ENCODE measurements at regions of chr5 and their contacts with region 1.

Region 1: GRCh38 chr5:60960591-60960990 is 15.6 kb downstream of the NDUFAF2 start:
- DNase-seq: peak; percentile 40
- H3K4me3 ChIP-seq: no peak overlapping the region
- H3K27ac ChIP-seq: no peak overlapping the region
- H3K4me1 ChIP-seq: no peaks in the 10 kb centered on the region
- H3K27me3 ChIP-seq: no peaks in the 10 kb centered on the region
- CTCF ChIP-seq: peak; percentile 23 to 45
- POLR2A ChIP-seq: no peak

Region 2: GRCh38 chr5:60872892-60873291 is 87.7 kb before region 1 on chr5:
- CTCF ChIA-PET with region 1: no interaction called
- POLR2A ChIA-PET with region 1: no interaction called
- dilution Hi-C with region 1: no loop called
- intact Hi-C with region 1: no loop called
- DNase-seq: no peak
- H3K4me3 ChIP-seq: no peak overlapping the region
- H3K27ac ChIP-seq: no peak overlapping the region
- H3K4me1 ChIP-seq: no peaks in the 10 kb centered on the region
- H3K27me3 ChIP-seq: no peaks in the 10 kb centered on the region
- CTCF ChIP-seq: no peak
- POLR2A ChIP-seq: no peak

Region 3: GRCh38 chr5:60972231-60972630 is 11.6 kb after region 1 on chr5:
- CTCF ChIA-PET with region 1: interaction called, 13 read pairs
- POLR2A ChIA-PET with region 1: no interaction called
- dilution Hi-C with region 1: no loop called
- intact Hi-C with region 1: no loop called
- DNase-seq: no peak
- H3K4me3 ChIP-seq: no peak overlapping the region
- H3K27ac ChIP-seq: no peak overlapping the region
- H3K4me1 ChIP-seq: no peaks in the 10 kb centered on the region
- H3K27me3 ChIP-seq: no peaks in the 10 kb centered on the region
- CTCF ChIP-seq: no peak
- POLR2A ChIP-seq: no peak

Region 4: DNA sequence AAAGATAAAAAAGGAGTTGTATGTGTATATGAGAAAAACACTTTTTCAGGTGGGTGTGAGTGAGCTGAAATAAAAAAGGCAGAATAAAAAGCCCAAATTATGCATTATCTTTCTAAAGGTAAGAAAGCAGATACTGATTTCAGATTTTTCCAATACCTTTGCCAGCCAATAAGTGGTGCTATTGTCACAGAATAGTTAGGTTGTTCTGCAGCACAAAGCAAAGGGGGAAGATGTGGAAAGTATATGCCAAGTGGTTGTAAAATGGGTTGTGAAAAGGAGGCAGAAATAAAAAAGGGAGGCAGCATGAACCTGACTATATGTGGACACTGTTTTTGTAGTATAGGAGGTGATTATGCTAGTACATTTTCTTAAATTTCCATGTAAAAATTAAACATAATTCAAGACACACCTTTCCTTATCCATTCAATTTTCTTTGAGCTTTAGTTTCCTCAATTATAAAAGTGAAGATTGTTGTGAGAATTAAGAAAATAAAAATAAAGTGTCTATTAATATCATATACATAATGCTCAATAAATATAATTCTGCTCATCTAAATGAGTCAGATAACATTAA is 94.9 kb after region 1 on chr5:
- CTCF ChIA-PET with region 1: interaction called, 31 read pairs
- POLR2A ChIA-PET with region 1: no interaction called
- dilution Hi-C with region 1: no loop called
- intact Hi-C with region 1: loop called (anchors 2 kb)
- DNase-seq: peak; percentile 66
- H3K4me3 ChIP-seq: no peak overlapping the region
- H3K27ac ChIP-seq: no peak overlapping the region
- H3K4me1 ChIP-seq: peaks cover 13% of the 10 kb centered on the region
- H3K27me3 ChIP-seq: no peaks in the 10 kb centered on the region
- CTCF ChIP-seq: peak; percentile 50 to 54
- POLR2A ChIP-seq: no peak

Region 5: DNA sequence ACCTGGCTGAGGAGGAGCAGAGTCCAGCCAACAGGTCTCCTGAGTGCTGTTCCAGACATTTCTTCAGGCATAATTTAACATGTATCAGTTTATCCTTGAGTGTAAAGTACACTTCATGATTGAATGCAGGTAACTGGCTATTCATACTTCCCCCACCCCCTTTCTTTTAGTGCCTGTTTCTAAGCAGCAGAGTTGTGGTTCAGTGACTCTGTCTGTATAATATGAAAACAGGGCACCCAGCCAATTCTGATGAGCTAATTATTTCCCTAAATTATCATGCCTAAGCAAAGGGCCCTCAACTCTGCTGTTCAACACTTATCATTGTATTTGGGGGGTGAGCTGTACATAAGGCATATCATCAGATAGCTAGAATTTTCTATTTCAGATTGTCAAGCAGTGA is 319.6 kb after region 1 on chr5:
- CTCF ChIA-PET with region 1: interaction called, 3 read pairs
- POLR2A ChIA-PET with region 1: no interaction called
- dilution Hi-C with region 1: no loop called
- intact Hi-C with region 1: loop called (anchors 5 kb)
- DNase-seq: peak; percentile 89
- H3K4me3 ChIP-seq: no peak overlapping the region
- H3K27ac ChIP-seq: no peak overlapping the region
- H3K4me1 ChIP-seq: peaks cover 39% of the 10 kb centered on the region
- H3K27me3 ChIP-seq: no peaks in the 10 kb centered on the region
- CTCF ChIP-seq: no peak
- POLR2A ChIP-seq: no peak

Region 6: GRCh38 chr5:61817472-61818326 is 857.1 kb after region 1 on chr5:
- CTCF ChIA-PET with region 1: interaction called, 10 read pairs
- POLR2A ChIA-PET with region 1: no interaction called
- dilution Hi-C with region 1: no loop called
- intact Hi-C with region 1: loop called (anchors 10 kb)
- DNase-seq: peak; percentile 61
- H3K4me3 ChIP-seq: no peak overlapping the region
- H3K27ac ChIP-seq: no peak overlapping the region
- H3K4me1 ChIP-seq: no peaks in the 10 kb centered on the region
- H3K27me3 ChIP-seq: peaks cover 9 to 12% of the 10 kb centered on the region in 2 experiments
- CTCF ChIP-seq: peak; percentile 47 to 58
- POLR2A ChIP-seq: no peak

Region 7: DNA sequence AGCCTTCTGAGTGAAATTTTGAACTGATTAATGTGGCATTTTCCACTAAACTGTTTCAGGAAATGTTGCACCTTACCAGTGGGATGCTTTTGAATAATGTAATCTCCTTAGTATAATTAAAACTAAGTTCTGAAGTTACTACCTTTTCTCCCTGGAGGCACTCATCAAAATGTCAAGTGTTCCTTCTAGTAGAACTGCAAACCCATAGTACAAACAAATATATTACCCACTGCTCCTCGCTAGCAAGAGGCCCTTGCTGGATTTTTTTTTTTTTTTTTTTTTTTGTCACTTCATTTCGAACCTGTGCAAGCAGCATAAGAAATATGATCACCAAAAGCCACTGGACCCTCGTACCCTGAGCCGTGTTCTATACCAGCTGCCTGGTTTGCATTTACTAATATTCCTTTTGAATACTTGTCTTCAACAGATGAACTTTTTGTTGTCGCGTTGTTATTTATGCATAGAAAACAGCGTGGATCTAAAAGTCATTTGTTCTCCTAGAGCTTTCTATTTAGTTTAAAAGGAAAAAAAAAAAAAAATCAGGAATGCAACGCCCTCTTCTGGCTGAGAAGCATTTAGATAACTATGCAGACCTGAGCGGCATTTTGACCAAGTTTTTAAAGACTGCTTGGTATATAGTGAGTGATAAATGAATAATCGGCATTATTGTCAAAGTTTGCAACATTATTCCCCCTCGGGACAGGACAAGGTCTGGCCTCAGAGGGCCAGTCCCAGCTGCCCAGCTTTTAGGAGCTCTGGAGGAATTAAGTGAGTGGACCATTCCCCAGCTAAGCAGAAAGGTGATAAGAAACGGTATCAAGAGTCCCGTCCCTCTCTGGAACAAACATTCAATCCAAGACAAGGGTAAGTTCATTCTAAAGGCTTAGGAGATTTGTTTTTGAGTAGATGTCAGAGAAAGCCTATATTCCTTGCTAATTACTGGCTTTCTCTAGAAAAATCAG is 1183.0 kb after region 1 on chr5:
- CTCF ChIA-PET with region 1: interaction called, 37 read pairs
- POLR2A ChIA-PET with region 1: no interaction called
- dilution Hi-C with region 1: no loop called
- intact Hi-C with region 1: loop called (anchors 2 kb)
- DNase-seq: peak; percentile 33
- H3K4me3 ChIP-seq: no peak overlapping the region
- H3K27ac ChIP-seq: no peak overlapping the region
- H3K4me1 ChIP-seq: peaks cover 3% of the 10 kb centered on the region
- H3K27me3 ChIP-seq: peaks cover 13 to 33% of the 10 kb centered on the region in 2 experiments
- CTCF ChIP-seq: peak; percentile 41 to 47
- POLR2A ChIP-seq: no peak